Right cardiac atrium (tissue), 5 donors: ENCODE measurements at regions of chr19 and their contacts with region 1.

Region 1: DNA sequence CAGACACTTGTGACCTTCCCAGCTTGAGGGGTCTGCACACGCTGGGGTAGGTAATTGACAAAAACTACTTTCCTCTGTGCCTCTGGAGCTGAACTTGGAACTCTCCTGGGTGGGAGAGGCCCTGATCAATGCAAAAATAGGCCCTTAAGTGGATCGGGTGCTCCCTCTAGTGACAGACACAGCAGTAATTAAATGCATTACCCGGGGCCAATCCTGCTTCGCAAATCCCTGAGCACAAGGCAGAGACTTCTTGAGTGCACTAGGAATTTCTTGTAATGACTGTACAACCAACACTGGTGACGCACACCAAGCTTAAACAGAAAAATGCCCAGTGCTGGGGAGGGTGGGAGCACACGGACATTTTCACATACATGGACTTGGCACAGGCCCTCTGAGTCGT is 10.6 kb upstream of the UBE2S start:
- DNase-seq: peak in 2 of 3 donors; percentile 38 to 58
- ATAC-seq: peak; percentile 84 to 86
- H3K4me3 ChIP-seq: no peak overlapping the region
- H3K27ac ChIP-seq: no peak overlapping the region
- H3K4me1 ChIP-seq: no peaks in the 10 kb centered on the region
- H3K27me3 ChIP-seq: no peaks in the 10 kb centered on the region

Region 2: DNA sequence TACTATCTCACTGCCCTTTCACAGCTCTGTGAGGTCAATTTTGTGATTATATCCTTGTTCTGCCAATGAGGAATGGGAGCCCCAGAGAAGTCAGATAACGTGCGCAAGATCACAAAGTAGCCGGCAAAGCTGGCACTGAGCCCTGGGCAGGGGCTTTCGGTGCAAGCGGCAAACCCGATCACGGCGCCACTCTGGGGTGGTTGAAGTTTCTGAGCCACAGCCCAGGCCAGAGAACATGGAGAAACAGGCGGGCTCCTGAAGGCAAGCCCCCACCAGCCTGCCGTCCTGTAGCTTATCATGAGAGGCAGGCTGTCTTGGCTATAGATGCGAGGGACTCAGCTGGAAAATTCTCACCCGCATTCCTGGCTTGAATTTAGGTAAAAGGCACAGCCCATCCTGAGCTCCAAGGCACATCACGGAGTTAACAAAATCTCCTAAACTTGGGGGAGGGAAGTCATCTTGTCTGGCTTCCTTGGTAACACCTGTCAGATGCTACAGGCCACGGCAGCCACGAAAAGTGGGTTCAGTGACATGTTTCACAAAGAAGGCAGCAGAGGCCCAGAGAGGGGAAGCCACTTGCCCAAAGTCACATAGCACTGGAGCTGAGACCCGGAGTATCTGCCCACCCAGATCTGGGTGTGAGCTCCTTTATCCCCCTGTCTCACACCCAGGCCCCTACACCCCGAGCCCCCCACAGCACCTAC is 281.6 kb before region 1 on chr19:
- intact Hi-C with region 1: loop called (anchors 2 to 10 kb)
- DNase-seq: peak in 1 of 3 donors; percentile 20
- ATAC-seq: no peak
- H3K4me3 ChIP-seq: no peak overlapping the region
- H3K27ac ChIP-seq: no peak overlapping the region
- H3K4me1 ChIP-seq: no peaks in the 10 kb centered on the region
- H3K27me3 ChIP-seq: no peaks in the 10 kb centered on the region

Region 3: GRCh38 chr19:55146078-55146704 is 272.0 kb before region 1 on chr19:
- intact Hi-C with region 1: loop called in 3 of 4 experiments (anchors 2 to 10 kb)
- DNase-seq: peak in 1 of 3 donors; percentile 35
- ATAC-seq: peak in 1 of 2 donors; percentile 2
- H3K4me3 ChIP-seq: no peak overlapping the region
- H3K27ac ChIP-seq: no peak overlapping the region
- H3K4me1 ChIP-seq: no peaks in the 10 kb centered on the region
- H3K27me3 ChIP-seq: no peaks in the 10 kb centered on the region

Region 4: GRCh38 chr19:55353803-55354697 is 64.1 kb before region 1 on chr19:
- intact Hi-C with region 1: no loop called
- DNase-seq: peak; percentile 69 to 86 (median 82)
- ATAC-seq: peak; percentile 84 to 93
- H3K4me3 ChIP-seq: peak overlapping the region; percentile 24
- H3K27ac ChIP-seq: no peak overlapping the region
- H3K4me1 ChIP-seq: no peaks in the 10 kb centered on the region
- H3K27me3 ChIP-seq: no peaks in the 10 kb centered on the region